ENCODE measurements at regions of chr1 and their contacts with region 1.

Region 1: GRCh38 chr1:156571949-156572662 is at the start of gene IQGAP3:
- DNase-seq: peak; percentile 95
- H3K4me3 Mint-ChIP-seq: peak within 1 kb of the TSS; percentile 92
- H3K27ac Mint-ChIP-seq: peak within 1 kb of the TSS; percentile 80
- H3K4me1 Mint-ChIP-seq: peaks cover 38% of the 10 kb centered on the region
- H3K27me3 Mint-ChIP-seq: peaks cover 22% of the 10 kb centered on the region
- CTCF ChIP-seq: no peak
- total RNA-seq, gene IQGAP3: 66.2 and 93.6 TPM in 2 replicates

Region 2: DNA sequence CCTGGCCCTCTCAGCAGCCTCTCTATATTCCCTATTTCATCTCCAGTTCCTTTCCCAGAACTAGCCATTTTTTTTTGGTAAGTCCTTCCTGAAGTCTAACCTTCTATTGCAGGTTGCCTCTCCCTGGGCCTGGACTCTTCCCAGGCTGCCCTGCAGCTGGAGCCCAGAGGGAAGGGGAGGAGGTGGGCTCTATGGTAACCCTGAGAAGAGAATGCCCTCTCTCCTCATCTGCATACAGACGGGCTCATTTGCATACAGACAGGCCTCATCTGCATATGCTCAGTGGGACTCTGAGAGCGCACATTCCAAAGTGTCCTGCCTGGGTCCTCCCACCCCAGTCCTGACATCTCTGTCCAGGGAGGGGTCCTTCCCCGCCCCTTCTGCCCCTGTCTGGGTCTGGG is 170.4 kb before region 1 on chr1:
- CTCF ChIA-PET with region 1: no interaction called
- intact Hi-C with region 1: no loop called
- DNase-seq: no peak
- H3K4me3 Mint-ChIP-seq: no peak overlapping the region
- H3K27ac Mint-ChIP-seq: no peak overlapping the region
- H3K4me1 Mint-ChIP-seq: peaks cover 24% of the 10 kb centered on the region
- H3K27me3 Mint-ChIP-seq: peaks cover 36% of the 10 kb centered on the region
- CTCF ChIP-seq: no peak

Region 3: GRCh38 chr1:156471496-156472490 is 100.3 kb before region 1 on chr1:
- CTCF ChIA-PET with region 1: no interaction called
- intact Hi-C with region 1: loop called (anchors 5 kb)
- DNase-seq: peak; percentile 93
- H3K4me3 Mint-ChIP-seq: peak overlapping the region; percentile 27
- H3K27ac Mint-ChIP-seq: peak overlapping the region; percentile 66
- H3K4me1 Mint-ChIP-seq: peaks cover 34% of the 10 kb centered on the region
- H3K27me3 Mint-ChIP-seq: no peaks in the 10 kb centered on the region
- CTCF ChIP-seq: no peak

Region 4: DNA sequence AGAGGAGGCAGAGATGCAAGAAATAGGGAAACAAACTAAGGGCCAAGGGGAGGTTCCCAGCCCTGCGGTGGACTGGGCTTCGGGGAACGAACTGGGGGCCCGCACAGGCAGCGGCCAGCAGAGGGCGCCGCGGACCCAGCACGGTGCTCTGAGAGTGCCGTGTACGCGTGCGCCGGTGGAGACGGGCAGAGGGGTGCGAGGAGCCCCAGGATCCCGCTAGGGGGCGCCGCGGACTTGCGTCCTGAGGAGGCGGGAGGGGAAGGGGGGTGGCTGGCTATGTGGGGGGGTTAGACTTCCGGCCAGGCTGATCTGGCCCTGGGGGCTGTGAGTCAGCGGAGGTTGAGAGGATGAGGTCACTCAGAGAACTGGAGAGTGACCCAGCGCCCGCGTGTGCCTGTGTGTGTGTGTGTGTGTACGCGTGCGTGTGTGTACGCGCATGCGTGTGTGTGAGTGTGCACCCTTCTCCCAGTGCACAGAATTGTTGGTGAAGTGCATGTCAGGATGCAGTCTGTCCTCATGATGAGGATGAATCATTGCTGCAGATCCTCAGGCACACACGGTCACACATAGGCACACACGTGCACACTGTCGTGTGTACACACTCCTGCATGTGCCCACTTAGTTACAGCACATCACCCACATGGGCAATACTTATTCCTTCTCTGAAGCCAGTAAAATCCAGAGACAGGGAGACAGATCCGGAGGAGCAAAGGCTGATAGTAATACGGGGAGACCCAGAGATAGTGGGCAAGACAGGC is 88.1 kb after region 1 on chr1:
- CTCF ChIA-PET with region 1: no interaction called
- intact Hi-C with region 1: no loop called
- DNase-seq: peak; percentile 99
- H3K4me3 Mint-ChIP-seq: peak overlapping the region; percentile 87
- H3K27ac Mint-ChIP-seq: peak overlapping the region; percentile 88
- H3K4me1 Mint-ChIP-seq: peaks cover 77% of the 10 kb centered on the region
- H3K27me3 Mint-ChIP-seq: no peaks in the 10 kb centered on the region
- CTCF ChIP-seq: peak; percentile 98

Region 5: GRCh38 chr1:156689035-156689952 is 117.2 kb after region 1 on chr1:
- CTCF ChIA-PET with region 1: no interaction called
- intact Hi-C with region 1: no loop called
- DNase-seq: peak; percentile 92
- H3K4me3 Mint-ChIP-seq: peak overlapping the region; percentile 15
- H3K27ac Mint-ChIP-seq: peak overlapping the region; percentile 2
- H3K4me1 Mint-ChIP-seq: peaks cover 38% of the 10 kb centered on the region
- H3K27me3 Mint-ChIP-seq: no peaks in the 10 kb centered on the region
- CTCF ChIP-seq: peak; percentile 82